ENCODE measurements at regions of chr12 and their contacts with region 1.

Region 1: GRCh38 chr12:6937481-6938297 is 5.9 kb upstream of the RNU7-1 start:
- DNase-seq: peak; percentile 90 to 96 (median 93)
- H3K4me3 ChIP-seq: peak overlapping the region; percentile 86
- H3K4me3 Mint-ChIP-seq: peak overlapping the region; percentile 82 to 91 (median 85)
- H3K27ac ChIP-seq: peak overlapping the region; percentile 87
- H3K27ac Mint-ChIP-seq: peak overlapping the region; percentile 92 to 98 (median 94)
- H3K4me1 ChIP-seq: peaks cover 34% of the 10 kb centered on the region
- H3K4me1 Mint-ChIP-seq: peaks cover 27 to 49% (median 35%) of the 10 kb centered on the region in 3 donors
- H3K27me3 ChIP-seq: no peaks in the 10 kb centered on the region
- H3K27me3 Mint-ChIP-seq: peaks cover 0 to 1% of the 10 kb centered on the region in 2 donors

Region 2: GRCh38 chr12:6828781-6829535 is 108.7 kb before region 1 on chr12:
- CTCF ChIA-PET with region 1: no interaction called
- POLR2A ChIA-PET with region 1: no interaction called
- DNase-seq: peak in 2 of 5 donors; percentile 14 to 24
- H3K4me3 ChIP-seq: peak overlapping the region; percentile 75
- H3K4me3 Mint-ChIP-seq: peak overlapping the region; percentile 83 to 97 (median 93)
- H3K27ac ChIP-seq: peak overlapping the region; percentile 78
- H3K27ac Mint-ChIP-seq: peak overlapping the region; percentile 64 to 94 (median 89)
- H3K4me1 ChIP-seq: peaks cover 11% of the 10 kb centered on the region
- H3K4me1 Mint-ChIP-seq: peaks cover 15 to 25% (median 20%) of the 10 kb centered on the region in 3 donors
- H3K27me3 ChIP-seq: peaks cover 13% of the 10 kb centered on the region
- H3K27me3 Mint-ChIP-seq: peaks cover 29 to 44% of the 10 kb centered on the region in 2 donors

Region 3: DNA sequence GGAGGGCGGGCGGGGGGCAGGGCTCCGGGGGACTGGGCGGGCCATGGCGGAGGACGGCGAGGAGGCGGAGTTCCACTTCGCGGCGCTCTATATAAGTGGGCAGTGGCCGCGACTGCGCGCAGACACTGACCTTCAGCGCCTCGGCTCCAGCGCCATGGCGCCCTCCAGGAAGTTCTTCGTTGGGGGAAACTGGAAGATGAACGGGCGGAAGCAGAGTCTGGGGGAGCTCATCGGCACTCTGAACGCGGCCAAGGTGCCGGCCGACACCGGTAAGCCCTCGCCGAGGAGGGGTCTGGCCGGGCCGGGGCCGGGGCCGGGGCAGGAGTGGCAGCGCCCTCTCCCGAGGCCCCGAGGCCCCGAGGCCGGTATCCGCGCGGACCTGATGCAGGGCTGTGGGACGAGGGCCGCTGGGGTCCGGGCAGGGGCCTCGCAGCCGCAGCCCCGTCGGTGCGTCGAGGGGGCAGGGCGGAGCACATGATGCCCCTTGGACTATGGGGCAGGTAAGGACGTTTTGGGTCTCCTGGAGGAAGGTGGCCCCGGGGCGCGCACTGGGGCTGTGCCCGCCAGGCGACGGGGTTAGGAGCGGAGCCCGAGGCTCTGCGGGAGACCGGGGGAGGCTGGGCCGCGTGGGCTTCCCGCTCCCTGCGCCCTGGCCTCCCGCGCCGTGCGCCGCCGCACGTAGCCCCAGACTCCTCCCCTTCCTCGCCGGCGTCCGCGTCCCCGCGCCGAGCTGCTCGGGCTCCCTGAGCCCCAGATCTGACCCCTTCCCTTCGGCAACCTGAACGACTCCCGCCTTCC is 70.1 kb before region 1 on chr12 and contains the start of gene TPI1:
- CTCF ChIA-PET with region 1: interaction called, 34 read pairs
- POLR2A ChIA-PET with region 1: interaction called, 22 read pairs
- DNase-seq: peak; percentile 62 to 85 (median 73)
- H3K4me3 ChIP-seq: peak within 1 kb of the TSS; percentile 58
- H3K4me3 Mint-ChIP-seq: peak within 1 kb of the TSS; percentile 87 to 98 (median 92)
- H3K27ac ChIP-seq: peak within 1 kb of the TSS; percentile 76
- H3K27ac Mint-ChIP-seq: peak within 1 kb of the TSS; percentile 85 to 96 (median 92)
- H3K4me1 ChIP-seq: peaks cover 38% of the 10 kb centered on the region
- H3K4me1 Mint-ChIP-seq: peaks cover 43 to 55% (median 47%) of the 10 kb centered on the region in 3 donors
- H3K27me3 ChIP-seq: no peaks in the 10 kb centered on the region
- H3K27me3 Mint-ChIP-seq: no peaks in the 10 kb centered on the region
- total RNA-seq, gene TPI1: 1,331 to 1,374 TPM

Region 4: GRCh38 chr12:6927379-6928024 is 10.2 kb before region 1 on chr12 and contains the start of gene ATN1:
- CTCF ChIA-PET with region 1: interaction called, 88 read pairs
- POLR2A ChIA-PET with region 1: interaction called, 12 read pairs
- DNase-seq: peak; percentile 27 to 68 (median 38)
- H3K4me3 ChIP-seq: peak within 1 kb of the TSS; percentile 59
- H3K4me3 Mint-ChIP-seq: peak within 1 kb of the TSS; percentile 82 to 97 (median 92)
- H3K27ac ChIP-seq: peak within 1 kb of the TSS; percentile 65
- H3K27ac Mint-ChIP-seq: peak within 1 kb of the TSS; percentile 68 to 99 (median 93)
- H3K4me1 ChIP-seq: peaks cover 48% of the 10 kb centered on the region
- H3K4me1 Mint-ChIP-seq: peaks cover 32 to 57% (median 46%) of the 10 kb centered on the region in 3 donors
- H3K27me3 ChIP-seq: no peaks in the 10 kb centered on the region
- H3K27me3 Mint-ChIP-seq: no peaks in the 10 kb centered on the region
- total RNA-seq, gene ATN1: 54.8 to 60.4 TPM

Region 5: DNA sequence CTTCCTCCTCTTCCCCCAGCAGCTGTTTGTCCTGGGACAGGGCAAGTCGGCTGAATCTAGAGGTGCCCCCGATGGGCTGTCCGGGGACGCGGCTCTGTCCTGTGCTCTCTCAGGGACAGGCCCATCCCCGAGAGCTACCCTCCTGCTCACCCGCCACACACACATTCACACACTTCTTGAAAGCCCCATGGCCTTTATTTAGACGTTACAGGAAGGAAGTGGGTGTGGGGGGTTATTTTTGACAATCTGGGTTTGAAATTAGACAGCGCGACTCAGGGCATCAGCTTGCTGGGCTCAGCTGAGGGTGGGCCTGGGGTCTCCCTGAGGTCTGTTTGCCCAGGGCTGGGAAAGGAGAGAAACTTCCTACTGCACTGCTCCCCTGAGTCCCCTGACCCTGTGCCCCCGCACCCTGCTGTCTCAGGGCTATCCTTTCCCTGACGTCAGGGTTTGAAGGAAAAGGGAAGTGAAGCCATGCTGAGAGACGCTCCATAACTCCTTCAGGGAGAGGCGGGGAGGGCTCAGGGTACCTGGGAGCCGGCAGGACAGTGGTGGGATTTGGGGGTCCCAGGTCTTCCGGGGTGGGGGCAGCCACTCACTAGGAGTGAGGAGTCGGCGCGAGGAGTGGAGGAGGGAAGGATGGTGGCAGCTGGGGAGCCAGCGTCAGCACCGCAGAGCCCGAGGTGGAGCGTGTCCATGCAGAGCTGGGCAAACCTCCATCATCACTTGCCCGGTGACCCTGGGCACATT is 21.5 kb after region 1 on chr12:
- CTCF ChIA-PET with region 1: interaction called, 815 read pairs
- POLR2A ChIA-PET with region 1: interaction called, 481 read pairs
- DNase-seq: peak; percentile 68 to 88 (median 83)
- H3K4me3 ChIP-seq: peak overlapping the region; percentile 54
- H3K4me3 Mint-ChIP-seq: peak overlapping the region; percentile 76 to 94 (median 91)
- H3K27ac ChIP-seq: peak overlapping the region; percentile 65
- H3K27ac Mint-ChIP-seq: peak overlapping the region; percentile 94 to 100 (median 98)
- H3K4me1 ChIP-seq: peaks cover 87% of the 10 kb centered on the region
- H3K4me1 Mint-ChIP-seq: peaks cover 77 to 88% (median 78%) of the 10 kb centered on the region in 3 donors
- H3K27me3 ChIP-seq: no peaks in the 10 kb centered on the region
- H3K27me3 Mint-ChIP-seq: no peaks in the 10 kb centered on the region

Region 6: DNA sequence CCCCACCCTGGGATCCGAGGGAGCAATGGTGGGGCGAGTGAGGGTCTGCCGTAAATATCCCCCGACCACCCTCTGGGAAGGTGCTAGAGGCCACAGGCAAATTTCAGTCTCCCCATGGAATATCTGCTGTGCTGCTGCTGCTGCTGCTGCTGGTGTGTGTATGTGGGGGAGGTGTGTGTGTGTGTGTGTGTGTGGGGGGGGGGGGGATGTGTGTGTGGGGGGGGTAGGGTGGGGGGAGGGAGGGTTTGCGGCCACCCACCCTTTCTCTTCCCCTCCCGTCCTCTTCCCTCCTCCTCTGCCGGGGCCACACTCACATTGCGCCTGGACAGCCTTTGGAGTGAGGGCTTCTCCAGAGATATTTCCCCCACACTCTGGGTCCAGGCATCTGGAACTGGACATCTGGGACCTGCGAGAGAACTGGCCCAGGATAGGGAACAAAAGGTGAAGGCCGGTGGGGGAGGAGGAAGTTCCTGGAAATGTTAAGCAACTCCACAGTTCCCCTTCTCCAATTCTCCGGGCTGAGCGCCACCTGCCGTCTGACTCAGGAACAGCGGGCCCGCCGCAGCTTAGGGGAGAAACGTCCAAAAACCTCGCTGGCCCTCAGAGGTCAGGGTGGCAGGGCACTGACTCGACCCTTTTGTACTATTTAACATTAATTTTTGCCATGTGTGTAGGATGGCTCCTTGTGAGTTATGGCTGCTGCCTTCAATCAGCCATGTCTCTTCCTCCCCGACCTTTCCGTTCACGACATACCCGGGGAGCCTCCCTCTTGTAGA is 171.3 kb after region 1 on chr12 and contains the start of gene C1RL:
- CTCF ChIA-PET with region 1: interaction called, 10 read pairs
- POLR2A ChIA-PET with region 1: interaction called, 10 read pairs
- DNase-seq: peak; percentile 62 to 83 (median 76)
- H3K4me3 ChIP-seq: peak within 1 kb of the TSS; percentile 96
- H3K4me3 Mint-ChIP-seq: peak within 1 kb of the TSS; percentile 93 to 99 (median 95)
- H3K27ac ChIP-seq: peak within 1 kb of the TSS; percentile 75
- H3K27ac Mint-ChIP-seq: peak within 1 kb of the TSS; percentile 86 to 97 (median 94)
- H3K4me1 ChIP-seq: peaks cover 25% of the 10 kb centered on the region
- H3K4me1 Mint-ChIP-seq: peaks cover 46 to 57% (median 52%) of the 10 kb centered on the region in 3 donors
- H3K27me3 ChIP-seq: no peaks in the 10 kb centered on the region
- H3K27me3 Mint-ChIP-seq: peaks cover 0 to 2% of the 10 kb centered on the region in 2 donors
- total RNA-seq, gene C1RL: 12.7 to 14.2 TPM

Region 7: DNA sequence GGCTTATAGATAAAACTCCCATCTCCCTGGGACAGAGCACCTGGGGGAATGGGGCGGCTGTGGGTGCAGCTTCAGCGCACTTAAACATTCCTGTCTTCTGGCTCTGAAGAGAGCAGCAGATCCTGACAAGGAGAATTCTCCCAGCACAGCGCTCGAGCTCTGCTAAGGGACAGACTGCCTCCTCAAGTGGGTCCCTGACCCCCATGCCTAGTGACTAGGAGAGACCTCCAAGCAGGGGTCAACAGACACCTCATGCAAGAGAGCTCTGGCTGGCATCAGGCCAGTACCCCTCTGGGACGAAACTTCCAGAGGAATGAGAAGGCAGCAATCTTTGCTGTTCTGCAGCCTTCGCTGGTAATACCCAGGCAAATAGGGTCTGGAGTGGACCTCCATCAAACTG is 534.4 kb after region 1 on chr12:
- CTCF ChIA-PET with region 1: no interaction called
- POLR2A ChIA-PET with region 1: no interaction called
- DNase-seq: no peak
- H3K4me3 ChIP-seq: no peak overlapping the region
- H3K4me3 Mint-ChIP-seq: no peak overlapping the region
- H3K27ac ChIP-seq: no peak overlapping the region
- H3K27ac Mint-ChIP-seq: no peak overlapping the region
- H3K4me1 ChIP-seq: no peaks in the 10 kb centered on the region
- H3K4me1 Mint-ChIP-seq: no peaks in the 10 kb centered on the region
- H3K27me3 ChIP-seq: no peaks in the 10 kb centered on the region
- H3K27me3 Mint-ChIP-seq: peaks cover 6 to 33% of the 10 kb centered on the region in 2 donors

Measured in CD8-positive, alpha-beta memory T cell (primary cell).